Transverse colon (tissue), 4 donors: ENCODE measurements at regions of chr2 and their contacts with region 1.

Region 1: GRCh38 chr2:221596192-221596591 is 24.1 kb upstream of the EPHA4 start:
- DNase-seq: no peak
- H3K4me3 ChIP-seq: no peak overlapping the region
- H3K27ac ChIP-seq: no peak overlapping the region
- H3K4me1 ChIP-seq: no peaks in the 10 kb centered on the region
- H3K27me3 ChIP-seq: no peaks in the 10 kb centered on the region
- CTCF ChIP-seq: no peak
- EP300 ChIP-seq: no peak
- POLR2A ChIP-seq: no peak

Region 2: DNA sequence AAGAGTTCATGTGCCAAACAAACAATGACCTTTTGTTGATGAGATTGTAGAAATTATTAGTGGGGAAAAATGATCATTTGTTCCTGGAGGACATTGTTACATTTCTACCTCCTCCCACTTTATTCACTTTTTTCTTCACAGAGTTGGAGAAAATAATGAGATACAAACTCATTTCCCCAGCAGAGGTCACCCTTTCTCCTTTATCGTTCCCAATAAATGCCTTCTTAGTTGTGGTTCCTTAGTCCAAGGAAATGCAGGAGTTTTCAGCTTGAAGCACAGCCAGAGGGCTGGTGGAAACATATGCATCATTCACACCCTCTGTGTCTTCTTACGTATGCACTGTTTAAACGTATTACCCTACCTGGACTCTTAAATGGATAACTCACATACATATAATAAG is 1860.0 kb before region 1 on chr2:
- in situ Hi-C with region 1: loop called in 1 of 4 experiments (anchors 25 kb)
- intact Hi-C with region 1: no loop called
- DNase-seq: no peak
- H3K4me3 ChIP-seq: no peak overlapping the region
- H3K27ac ChIP-seq: no peak overlapping the region
- H3K4me1 ChIP-seq: no peaks in the 10 kb centered on the region
- H3K27me3 ChIP-seq: no peaks in the 10 kb centered on the region
- CTCF ChIP-seq: peak; percentile 22 to 44 (median 42)
- EP300 ChIP-seq: no peak
- POLR2A ChIP-seq: no peak

Region 3: DNA sequence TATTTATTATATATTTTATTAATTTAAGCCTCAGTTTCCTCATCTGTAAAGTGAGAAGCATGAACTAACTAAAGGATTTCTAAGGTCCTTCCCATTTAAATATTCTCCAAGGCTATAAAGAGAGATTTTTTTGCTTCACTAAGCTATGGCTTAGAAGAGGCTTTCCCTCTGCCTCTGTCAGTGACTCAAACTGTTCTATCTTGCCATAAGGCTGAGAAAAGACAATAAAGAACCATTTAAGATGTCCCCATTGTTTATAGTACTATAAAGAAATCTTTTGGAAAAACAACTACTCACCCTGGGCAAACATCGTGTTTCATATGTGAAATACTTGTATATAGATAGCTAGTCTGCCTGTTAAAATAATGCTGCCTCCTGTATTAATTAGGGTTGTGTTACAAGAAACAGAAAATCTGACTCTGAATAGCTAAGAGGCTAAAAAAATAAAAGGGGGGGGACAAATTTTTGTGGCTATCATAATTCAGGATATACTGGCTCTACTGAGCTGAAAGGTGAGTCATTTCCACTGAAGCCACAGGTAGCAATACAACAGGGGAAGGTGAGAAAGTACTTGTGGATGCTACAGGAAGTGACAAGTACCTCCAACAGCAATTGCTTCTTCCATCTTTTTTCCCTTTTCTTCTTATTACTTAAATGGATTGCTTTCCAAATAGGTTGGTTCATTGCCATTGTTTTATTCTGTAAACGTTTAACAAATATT is 49.5 kb before region 1 on chr2:
- in situ Hi-C with region 1: no loop called
- intact Hi-C with region 1: no loop called
- DNase-seq: no peak
- H3K4me3 ChIP-seq: no peak overlapping the region
- H3K27ac ChIP-seq: peak overlapping the region in 1 of 4 donors; percentile 11
- H3K4me1 ChIP-seq: peaks cover 0 to 8% (median 3%) of the 10 kb centered on the region in 4 donors
- H3K27me3 ChIP-seq: no peaks in the 10 kb centered on the region
- CTCF ChIP-seq: no peak
- EP300 ChIP-seq: no peak
- POLR2A ChIP-seq: no peak

Region 4: GRCh38 chr2:222142027-222142426 is 545.8 kb after region 1 on chr2:
- in situ Hi-C with region 1: no loop called
- intact Hi-C with region 1: no loop called
- DNase-seq: no peak
- H3K4me3 ChIP-seq: no peak overlapping the region
- H3K27ac ChIP-seq: no peak overlapping the region
- H3K4me1 ChIP-seq: no peaks in the 10 kb centered on the region
- H3K27me3 ChIP-seq: no peaks in the 10 kb centered on the region
- CTCF ChIP-seq: no peak
- EP300 ChIP-seq: no peak
- POLR2A ChIP-seq: no peak